ENCODE measurements at regions of chr13 and their contacts with region 1.

Region 1: GRCh38 chr13:63092456-63092855 is 1676.8 kb upstream of the PCDH20 start:
- DNase-seq: no peak
- CTCF ChIP-seq: no peak

Region 2: GRCh38 chr13:63107179-63107943 is 14.9 kb after region 1 on chr13:
- CTCF ChIA-PET with region 1: interaction called, 11 read pairs
- POLR2A ChIA-PET with region 1: no interaction called
- DNase-seq: no peak
- CTCF ChIP-seq: no peak

Region 3: DNA sequence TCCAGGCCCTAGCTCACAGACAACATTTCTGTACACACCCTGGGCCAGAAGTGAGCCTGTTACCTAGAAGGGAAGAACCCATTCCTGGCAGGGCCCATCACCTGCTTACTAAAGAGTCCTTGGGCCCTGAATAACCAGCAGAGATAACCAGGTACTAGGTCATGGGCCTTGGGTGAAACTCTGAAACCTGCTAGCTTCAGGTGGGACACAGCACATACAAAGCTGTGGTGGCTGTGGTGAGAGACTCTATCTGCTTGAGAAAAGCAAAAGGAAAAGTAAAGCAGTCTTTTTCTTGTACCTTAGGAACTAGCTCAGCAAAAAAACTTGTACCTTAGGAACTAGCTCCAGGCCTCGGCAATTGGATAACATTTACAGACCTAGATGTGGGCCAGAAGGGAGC is 219.1 kb after region 1 on chr13:
- CTCF ChIA-PET with region 1: no interaction called
- POLR2A ChIA-PET with region 1: no interaction called
- DNase-seq: no peak
- CTCF ChIP-seq: no peak

Region 4: GRCh38 chr13:63393112-63393511 is 300.7 kb after region 1 on chr13:
- CTCF ChIA-PET with region 1: no interaction called
- POLR2A ChIA-PET with region 1: no interaction called
- DNase-seq: no peak
- CTCF ChIP-seq: no peak